ENCODE measurements at regions of chr6 and their contacts with region 1.

Region 1: DNA sequence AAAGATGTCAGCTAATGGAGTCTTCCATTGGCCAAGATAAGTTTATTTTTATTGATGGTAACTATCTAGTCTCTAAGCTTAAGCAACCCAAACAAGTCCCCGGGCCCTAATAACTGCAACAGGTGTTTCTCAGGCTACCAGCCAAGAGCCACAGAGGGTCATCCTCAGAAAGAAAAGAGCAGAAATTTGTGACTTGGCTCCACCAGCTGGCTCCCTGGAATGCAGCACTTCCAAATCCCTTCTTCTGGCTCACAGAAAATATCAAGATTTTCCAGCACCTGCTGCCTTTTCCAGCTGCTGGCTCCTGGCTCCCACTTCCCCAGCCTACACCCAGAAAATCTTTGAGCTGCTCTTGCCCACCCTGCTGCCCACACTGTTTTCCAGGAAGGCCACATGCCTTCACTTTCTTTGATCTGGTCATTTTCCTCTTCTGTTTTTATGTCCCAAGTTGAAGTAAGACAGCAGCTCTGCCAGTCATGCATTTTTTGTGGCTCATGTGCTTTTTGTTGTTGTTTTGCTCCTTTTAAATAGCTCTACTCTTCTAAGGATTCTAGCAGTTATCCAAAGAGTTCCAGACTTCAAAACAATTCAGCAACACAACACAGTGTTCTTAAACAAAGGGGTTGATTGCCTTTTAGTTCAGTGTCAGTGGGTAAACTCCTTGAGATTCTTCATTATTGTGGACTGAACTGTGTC is 151.0 kb upstream of the SMLR1 start:
- DNase-seq: no peak
- ATAC-seq: no peak
- H3K4me3 ChIP-seq: no peak overlapping the region
- H3K27ac ChIP-seq: no peak overlapping the region
- H3K4me1 ChIP-seq: peaks cover 5 to 7% of the 10 kb centered on the region in 2 experiments; a peak in 3 of 4 replicates
- H3K27me3 ChIP-seq: no peaks in the 10 kb centered on the region
- CTCF ChIP-seq: peak; percentile 9 to 45 (median 15); a peak in 1 of 6 replicates
- POLR2A ChIP-seq: no peak
- RAD21 ChIP-seq: peak; percentile 72

Region 2: GRCh38 chr6:130322673-130323268 is 353.5 kb before region 1 on chr6:
- CTCF ChIA-PET with region 1: no interaction called
- POLR2A ChIA-PET with region 1: no interaction called
- RAD21 ChIA-PET with region 1: no interaction called
- intact Hi-C with region 1: loop called (anchors 5 kb)
- DNase-seq: peak; percentile 48
- ATAC-seq: peak; percentile 77
- H3K4me3 ChIP-seq: no peak overlapping the region
- H3K27ac ChIP-seq: no peak overlapping the region; the same call in 1 of the 2 replicates
- H3K4me1 ChIP-seq: no peaks in the 10 kb centered on the region; a peak in 1 of 4 replicates
- H3K27me3 ChIP-seq: no peaks in the 10 kb centered on the region
- CTCF ChIP-seq: peak; percentile 83 to 95 (median 90)
- POLR2A ChIP-seq: no peak
- RAD21 ChIP-seq: peak; percentile 95

Measured in HCT116 (cell line).